Activated CD4-positive, alpha-beta memory T cell treated with anti-CD3 and anti-CD28 coated beads for 36 hours (primary cell): ENCODE measurements at regions of chr11 and their contacts with region 1.

Region 1: GRCh38 chr11:9265211-9266131 is at the start of gene DENND5A:
- DNase-seq: peak; percentile 69
- H3K4me3 Mint-ChIP-seq: peak within 1 kb of the TSS; percentile 89
- H3K27ac Mint-ChIP-seq: peak within 1 kb of the TSS; percentile 96
- H3K4me1 Mint-ChIP-seq: peaks cover 30% of the 10 kb centered on the region
- H3K27me3 Mint-ChIP-seq: peaks cover 8% of the 10 kb centered on the region
- total RNA-seq, gene DENND5A: 41.3 to 41.9 TPM

Region 2: DNA sequence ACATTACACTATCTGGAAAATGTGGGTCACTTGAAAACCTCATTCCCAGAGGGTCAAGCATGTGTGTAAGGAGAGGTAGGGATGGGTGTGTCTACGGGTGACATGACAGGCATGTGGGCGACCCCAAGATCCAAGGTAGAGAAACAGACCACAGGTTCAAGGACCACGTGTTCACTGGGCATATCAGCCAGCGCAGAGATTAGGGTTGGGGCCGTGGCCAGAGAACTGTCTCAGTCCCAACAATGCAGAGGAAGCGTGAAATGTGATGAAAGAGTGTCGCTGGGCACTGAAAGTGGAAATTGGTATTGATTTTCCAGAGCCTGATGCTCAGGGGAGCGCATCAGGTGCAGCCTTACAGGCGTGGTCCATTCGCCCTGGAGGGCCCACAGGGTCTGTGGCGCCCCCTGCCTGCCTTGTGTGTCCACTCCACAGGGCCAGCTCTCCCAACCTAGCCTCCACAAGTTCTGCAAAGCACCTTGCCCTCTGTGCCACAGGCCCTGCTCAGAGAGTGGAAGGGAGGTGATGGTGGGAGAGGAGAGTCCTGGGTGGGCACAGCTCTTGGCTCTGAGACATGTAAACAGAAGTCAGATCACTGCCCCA is 947.0 kb before region 1 on chr11:
- CTCF ChIA-PET with region 1: no interaction called
- POLR2A ChIA-PET with region 1: no interaction called
- intact Hi-C with region 1: no loop called
- DNase-seq: peak; percentile 16
- H3K4me3 Mint-ChIP-seq: no peak overlapping the region
- H3K27ac Mint-ChIP-seq: no peak overlapping the region
- H3K4me1 Mint-ChIP-seq: no peaks in the 10 kb centered on the region
- H3K27me3 Mint-ChIP-seq: peaks cover 12% of the 10 kb centered on the region

Region 3: DNA sequence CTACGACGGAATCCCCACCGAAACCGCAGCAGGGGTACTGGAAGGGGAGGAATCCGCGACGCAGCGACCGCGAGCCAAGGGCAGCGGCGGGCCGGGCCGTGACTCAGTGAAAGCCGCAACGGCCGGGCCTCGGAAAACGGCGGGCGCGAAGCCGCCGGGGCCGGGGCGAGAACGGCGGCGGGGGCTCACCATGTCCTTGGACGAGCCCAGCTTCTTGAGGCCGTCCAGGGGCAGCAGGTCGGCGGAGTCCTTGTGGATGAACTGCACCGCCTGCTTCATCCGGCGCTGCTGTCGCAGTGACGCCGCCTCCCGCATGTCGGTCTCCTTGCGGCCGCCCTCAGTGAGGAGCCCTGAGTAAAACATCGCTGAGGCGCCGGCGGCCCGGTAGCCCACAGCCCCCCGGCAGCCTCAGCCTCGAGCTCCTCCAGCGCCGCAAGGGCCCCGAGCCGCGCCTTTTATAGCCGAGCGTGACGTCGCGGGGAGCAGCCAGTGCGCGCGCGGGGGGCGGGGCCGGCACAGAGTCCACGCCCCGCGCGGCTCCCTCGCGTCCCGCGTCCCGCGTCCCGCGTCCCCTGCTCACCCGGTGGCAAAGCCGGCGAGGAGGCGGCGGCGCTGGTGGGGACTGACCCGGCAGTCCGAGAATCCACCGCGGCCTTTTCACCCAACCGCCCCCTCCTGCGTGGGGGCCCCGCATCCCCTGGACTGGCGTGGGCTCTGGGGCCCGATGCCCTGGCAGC is 261.7 kb before region 1 on chr11 and contains the start of gene NRIP3:
- CTCF ChIA-PET with region 1: no interaction called
- POLR2A ChIA-PET with region 1: no interaction called
- intact Hi-C with region 1: loop called (anchors 2 kb)
- DNase-seq: peak; percentile 74
- H3K4me3 Mint-ChIP-seq: peak within 1 kb of the TSS; percentile 70
- H3K27ac Mint-ChIP-seq: no peak within 1 kb of the TSS
- H3K4me1 Mint-ChIP-seq: peaks cover 27% of the 10 kb centered on the region
- H3K27me3 Mint-ChIP-seq: peaks cover 36% of the 10 kb centered on the region
- total RNA-seq, gene NRIP3: 2.7 to 2.9 TPM

Region 4: GRCh38 chr11:9210922-9211320 is 54.5 kb before region 1 on chr11:
- CTCF ChIA-PET with region 1: interaction called, 6 read pairs
- POLR2A ChIA-PET with region 1: interaction called, 11 read pairs
- intact Hi-C with region 1: loop called (anchors 1 kb)
- DNase-seq: peak; percentile 43
- H3K4me3 Mint-ChIP-seq: no peak overlapping the region
- H3K27ac Mint-ChIP-seq: peak overlapping the region; percentile 75
- H3K4me1 Mint-ChIP-seq: peaks cover 66% of the 10 kb centered on the region
- H3K27me3 Mint-ChIP-seq: no peaks in the 10 kb centered on the region

Region 5: DNA sequence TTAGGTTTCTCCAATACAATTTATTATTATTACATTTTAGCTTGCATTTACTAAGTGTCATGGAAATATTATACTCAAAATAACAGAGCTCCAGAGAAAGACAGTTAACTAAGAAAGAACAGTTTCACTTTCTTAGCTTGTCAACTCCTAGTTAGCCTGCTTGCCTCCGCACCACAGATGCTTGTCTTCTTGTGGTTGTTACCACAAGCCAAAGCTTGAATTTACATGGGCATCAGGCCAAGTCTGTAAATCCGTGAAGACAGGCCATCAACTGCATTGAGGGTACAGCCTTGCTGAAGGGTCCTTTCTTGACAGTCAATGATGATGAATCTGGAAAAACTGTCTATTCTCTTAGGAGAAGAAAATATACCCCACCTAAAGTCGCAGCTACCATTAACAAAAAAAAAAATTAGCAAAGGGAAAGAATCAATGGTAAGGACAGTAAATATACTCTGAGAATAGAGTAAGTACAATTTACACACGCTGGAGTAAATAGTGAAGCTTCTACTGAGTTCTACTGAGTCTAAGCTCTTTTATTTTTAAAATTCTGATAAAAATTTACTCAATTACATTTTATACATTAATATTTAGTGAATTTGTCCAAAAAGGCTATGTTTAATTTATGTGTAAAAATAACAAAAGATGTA is 15.3 kb after region 1 on chr11:
- CTCF ChIA-PET with region 1: no interaction called
- POLR2A ChIA-PET with region 1: interaction called, 4 read pairs
- intact Hi-C with region 1: loop called (anchors 2 kb)
- DNase-seq: peak; percentile 69
- H3K4me3 Mint-ChIP-seq: no peak overlapping the region
- H3K27ac Mint-ChIP-seq: no peak overlapping the region
- H3K4me1 Mint-ChIP-seq: peaks cover 13% of the 10 kb centered on the region
- H3K27me3 Mint-ChIP-seq: no peaks in the 10 kb centered on the region

Region 6: GRCh38 chr11:9363954-9364912 is 98.8 kb after region 1 on chr11:
- CTCF ChIA-PET with region 1: no interaction called
- POLR2A ChIA-PET with region 1: no interaction called
- intact Hi-C with region 1: loop called (anchors 1 kb)
- DNase-seq: peak; percentile 93
- H3K4me3 Mint-ChIP-seq: peak overlapping the region; percentile 74
- H3K27ac Mint-ChIP-seq: peak overlapping the region; percentile 88
- H3K4me1 Mint-ChIP-seq: peaks cover 35% of the 10 kb centered on the region
- H3K27me3 Mint-ChIP-seq: no peaks in the 10 kb centered on the region